WTC11 (cell line): ENCODE measurements at regions of chr11 and their contacts with region 1.

Region 1: GRCh38 chr11:122863704-122864326 is 18.7 kb upstream of the JHY start:
- DNase-seq: peak; percentile 47
- ATAC-seq: no peak
- H3K4me3 Mint-ChIP-seq: no peak overlapping the region
- H3K27ac Mint-ChIP-seq: no peak overlapping the region
- H3K4me1 Mint-ChIP-seq: no peaks in the 10 kb centered on the region; the same call in 1 of the 2 replicates
- H3K27me3 Mint-ChIP-seq: no peaks in the 10 kb centered on the region
- CTCF ChIP-seq: peak; percentile 44; the same call in 1 of the 2 replicates

Region 2: DNA sequence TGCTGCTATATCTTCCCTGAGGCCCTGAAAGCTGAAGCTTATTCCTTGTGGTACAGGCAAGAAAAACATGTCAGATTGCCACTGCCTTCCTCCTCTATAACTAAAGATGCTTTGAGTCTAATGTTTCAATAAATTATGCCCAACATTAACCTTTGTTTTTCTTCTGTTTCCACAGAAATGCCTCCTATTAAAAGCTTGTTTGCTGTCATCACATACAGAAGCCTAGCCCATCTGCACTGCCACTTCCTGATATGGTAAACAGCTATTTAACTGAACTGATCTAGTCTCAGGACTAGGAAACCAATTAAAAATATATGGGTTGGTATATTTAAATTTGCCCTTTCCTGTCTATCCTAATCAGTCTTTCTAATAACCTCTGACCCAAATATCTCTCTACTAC is 42.6 kb before region 1 on chr11:
- CTCF ChIA-PET with region 1: no interaction called
- POLR2A ChIA-PET with region 1: no interaction called
- DNase-seq: no peak
- ATAC-seq: no peak
- H3K4me3 Mint-ChIP-seq: no peak overlapping the region
- H3K27ac Mint-ChIP-seq: no peak overlapping the region
- H3K4me1 Mint-ChIP-seq: peaks cover 9% of the 10 kb centered on the region
- H3K27me3 Mint-ChIP-seq: peaks cover 8% of the 10 kb centered on the region
- CTCF ChIP-seq: no peak

Region 3: GRCh38 chr11:122882857-122883645 is 19.2 kb after region 1 on chr11:
- CTCF ChIA-PET with region 1: interaction called, 18 read pairs
- POLR2A ChIA-PET with region 1: no interaction called
- DNase-seq: no peak
- ATAC-seq: peak; percentile 63
- H3K4me3 Mint-ChIP-seq: peak overlapping the region; percentile 82
- H3K27ac Mint-ChIP-seq: no peak overlapping the region
- H3K4me1 Mint-ChIP-seq: peaks cover 41% of the 10 kb centered on the region
- H3K27me3 Mint-ChIP-seq: peaks cover 17% of the 10 kb centered on the region
- CTCF ChIP-seq: no peak

Region 4: DNA sequence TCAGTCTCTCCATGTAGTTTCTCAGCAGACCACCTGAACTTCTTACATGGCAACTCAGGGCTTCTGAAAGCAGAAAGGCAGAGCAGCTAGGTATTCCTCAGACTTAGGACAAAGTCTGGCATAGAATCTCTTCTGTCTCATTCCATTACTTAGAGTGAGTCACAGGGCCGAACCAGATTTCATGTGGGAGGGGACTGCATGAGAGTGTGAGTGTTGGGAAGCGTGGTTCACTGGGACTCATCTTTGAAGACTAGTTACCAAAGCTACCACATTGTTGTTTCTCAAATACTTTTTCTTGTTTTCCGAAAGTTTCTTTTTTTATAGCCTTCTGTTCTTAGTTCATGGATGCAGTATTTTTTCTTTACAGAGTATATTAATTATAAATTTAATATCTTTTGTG is 826.7 kb after region 1 on chr11:
- CTCF ChIA-PET with region 1: no interaction called
- POLR2A ChIA-PET with region 1: no interaction called
- DNase-seq: no peak
- ATAC-seq: no peak
- H3K4me3 Mint-ChIP-seq: no peak overlapping the region
- H3K27ac Mint-ChIP-seq: no peak overlapping the region
- H3K4me1 Mint-ChIP-seq: no peaks in the 10 kb centered on the region
- H3K27me3 Mint-ChIP-seq: no peaks in the 10 kb centered on the region
- CTCF ChIP-seq: no peak